Mammary epithelial cell (primary cell): ENCODE measurements at regions of chr22 and their contacts with region 1.

Region 1: DNA sequence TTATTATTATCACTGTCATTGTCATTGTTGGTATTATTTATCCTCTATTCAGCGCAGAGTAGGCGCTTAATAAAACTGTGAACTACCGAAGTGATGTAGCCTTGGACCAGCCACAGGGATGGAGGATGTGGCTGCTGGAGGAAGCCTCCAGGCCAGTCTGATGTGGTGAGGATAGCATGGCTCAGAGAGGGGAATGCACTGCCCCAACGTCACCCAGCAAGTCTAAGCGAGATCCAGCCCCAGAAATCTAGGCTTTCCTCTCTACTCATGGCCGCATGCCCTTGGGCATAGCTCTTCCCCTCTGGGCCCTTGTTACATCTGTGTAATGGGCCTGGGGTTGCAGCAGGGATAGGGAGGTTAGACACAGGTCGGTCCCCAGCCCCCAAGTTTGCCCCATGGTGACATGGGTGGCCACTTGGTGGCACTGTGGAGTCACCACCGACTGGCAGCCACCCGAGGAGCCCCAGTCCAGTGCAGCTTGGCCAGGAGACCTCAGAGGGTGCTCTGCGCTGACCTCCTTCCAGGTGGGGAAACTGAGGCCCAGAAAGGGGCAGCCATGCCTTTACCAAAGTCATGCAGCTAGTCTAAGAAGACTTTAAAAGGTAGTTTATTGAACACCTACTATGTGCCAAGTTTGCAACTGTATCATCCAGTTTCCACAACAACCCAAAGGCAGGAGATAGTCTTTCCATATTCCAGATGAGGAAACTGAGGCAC is 395.7 kb downstream of the MN1 start:
- DNase-seq: peak; percentile 45
- H3K4me3 ChIP-seq: no peak overlapping the region
- H3K27ac ChIP-seq: no peak overlapping the region
- H3K4me1 ChIP-seq: peaks cover 8% of the 10 kb centered on the region
- H3K27me3 ChIP-seq: no peaks in the 10 kb centered on the region
- CTCF ChIP-seq: peak; percentile 61 to 87

Region 2: GRCh38 chr22:27134315-27134701 is 271.5 kb before region 1 on chr22:
- CTCF ChIA-PET with region 1: no interaction called
- dilution Hi-C with region 1: no loop called
- in situ Hi-C with region 1: no loop called
- intact Hi-C with region 1: loop called (anchors 10 kb)
- DNase-seq: peak; percentile 89
- H3K4me3 ChIP-seq: no peak overlapping the region
- H3K27ac ChIP-seq: no peak overlapping the region
- H3K4me1 ChIP-seq: peaks cover 22% of the 10 kb centered on the region
- H3K27me3 ChIP-seq: no peaks in the 10 kb centered on the region
- CTCF ChIP-seq: no peak

Region 3: DNA sequence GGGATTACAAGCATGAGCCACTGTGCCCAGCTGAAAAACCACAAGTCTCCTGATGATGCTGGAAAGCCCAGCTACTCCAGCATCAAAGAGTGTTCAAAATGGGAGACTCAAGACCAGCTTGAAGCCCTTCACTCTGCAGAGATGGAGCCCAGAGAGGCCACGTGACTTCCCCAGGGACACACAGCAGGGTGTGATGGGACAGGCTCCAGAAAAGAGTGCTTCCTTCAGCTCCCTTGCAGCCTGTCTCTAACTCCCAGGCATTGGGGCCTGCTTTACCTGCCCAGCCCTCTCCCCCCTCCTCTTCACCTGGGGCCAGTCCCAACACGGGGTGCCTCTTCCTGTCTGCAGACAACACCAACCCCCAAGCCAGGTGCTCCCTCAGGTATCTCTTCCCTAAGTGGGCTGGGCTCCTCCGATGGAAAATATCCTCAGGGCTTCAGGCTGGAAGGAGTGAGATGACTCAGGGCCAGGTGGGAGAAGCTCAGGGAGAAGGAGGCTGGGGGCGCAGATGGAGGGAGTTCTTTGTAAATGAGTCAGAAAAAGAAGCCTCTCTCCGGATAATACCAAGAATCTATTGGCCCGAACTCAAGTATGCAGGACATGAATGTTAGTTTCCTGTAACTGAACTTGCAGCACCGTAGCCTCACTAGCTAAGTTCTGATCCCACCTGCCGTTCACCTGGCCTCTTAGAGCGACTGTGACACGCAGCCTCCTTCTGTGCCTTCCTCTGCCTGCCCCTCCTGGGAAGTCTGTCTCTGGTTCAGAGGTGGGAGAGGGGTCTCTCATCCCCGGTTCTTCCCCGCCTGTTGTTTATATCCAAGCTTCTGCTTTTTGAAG is 69.1 kb after region 1 on chr22:
- CTCF ChIA-PET with region 1: no interaction called
- dilution Hi-C with region 1: no loop called
- in situ Hi-C with region 1: no loop called
- intact Hi-C with region 1: loop called (anchors 1 kb)
- DNase-seq: peak; percentile 100
- H3K4me3 ChIP-seq: peak overlapping the region in 1 of 3 experiments; percentile 4
- H3K27ac ChIP-seq: peak overlapping the region; percentile 99
- H3K4me1 ChIP-seq: peaks cover 44% of the 10 kb centered on the region
- H3K27me3 ChIP-seq: no peaks in the 10 kb centered on the region
- CTCF ChIP-seq: peak in 1 of 2 donors; percentile 10

Region 4: GRCh38 chr22:27617214-27617881 is 211.5 kb after region 1 on chr22:
- CTCF ChIA-PET with region 1: no interaction called
- dilution Hi-C with region 1: no loop called
- in situ Hi-C with region 1: no loop called
- intact Hi-C with region 1: loop called (anchors 1 kb)
- DNase-seq: no peak
- H3K4me3 ChIP-seq: no peak overlapping the region
- H3K27ac ChIP-seq: no peak overlapping the region
- H3K4me1 ChIP-seq: peaks cover 7% of the 10 kb centered on the region
- H3K27me3 ChIP-seq: no peaks in the 10 kb centered on the region
- CTCF ChIP-seq: peak; percentile 25 to 35

Region 5: GRCh38 chr22:27804470-27805297 is 398.9 kb after region 1 on chr22:
- CTCF ChIA-PET with region 1: no interaction called
- dilution Hi-C with region 1: no loop called
- in situ Hi-C with region 1: loop called (anchors 10 kb)
- intact Hi-C with region 1: loop called (anchors 1 kb)
- DNase-seq: peak; percentile 41
- H3K4me3 ChIP-seq: no peak overlapping the region
- H3K27ac ChIP-seq: no peak overlapping the region
- H3K4me1 ChIP-seq: peaks cover 19% of the 10 kb centered on the region
- H3K27me3 ChIP-seq: no peaks in the 10 kb centered on the region
- CTCF ChIP-seq: peak; percentile 52 to 75

Region 6: GRCh38 chr22:28009272-28009827 is 603.5 kb after region 1 on chr22:
- CTCF ChIA-PET with region 1: no interaction called
- dilution Hi-C with region 1: no loop called
- in situ Hi-C with region 1: loop called in 1 of 2 experiments (anchors 25 kb)
- intact Hi-C with region 1: loop called (anchors 2 kb)
- DNase-seq: peak; percentile 54
- H3K4me3 ChIP-seq: no peak overlapping the region
- H3K27ac ChIP-seq: no peak overlapping the region
- H3K4me1 ChIP-seq: peaks cover 3% of the 10 kb centered on the region
- H3K27me3 ChIP-seq: no peaks in the 10 kb centered on the region
- CTCF ChIP-seq: peak; percentile 93 to 98